ENCODE measurements at regions of chr20 and their contacts with region 1.

Region 1: DNA sequence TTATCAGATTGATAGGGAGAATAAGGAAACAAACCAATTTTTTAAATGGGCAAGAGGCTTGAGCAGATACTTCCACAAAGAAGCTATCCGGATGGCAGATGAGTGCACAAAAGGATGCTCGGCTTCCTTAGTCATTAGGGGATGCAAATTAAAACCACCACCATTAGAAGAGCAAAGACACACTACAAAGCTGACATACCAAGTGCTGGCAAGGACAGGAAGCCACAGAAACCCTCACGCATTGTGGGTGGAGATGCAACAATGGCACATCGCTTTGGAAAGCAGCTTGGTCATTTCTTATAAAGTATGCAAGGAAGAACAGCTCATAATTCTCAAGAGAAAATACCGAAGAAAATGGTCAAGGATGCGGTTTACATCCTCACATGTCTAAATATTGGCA is 19.8 kb downstream of the BFSP1 start:
- DNase-seq: no peak
- ATAC-seq: no peak
- H3K4me3 ChIP-seq: no peak overlapping the region
- H3K27ac ChIP-seq: no peak overlapping the region
- H3K4me1 ChIP-seq: no peaks in the 10 kb centered on the region
- CTCF ChIP-seq: no peak
- EP300 ChIP-seq: no peak
- POLR2A ChIP-seq: no peak
- RAD21 ChIP-seq: no peak

Region 2: GRCh38 chr20:17530716-17531664 is 19.6 kb after region 1 on chr20 and contains the start of gene BFSP1:
- CTCF ChIA-PET with region 1: interaction called, 32 read pairs
- POLR2A ChIA-PET with region 1: interaction called, 4 read pairs
- DNase-seq: peak; percentile 58 to 79
- ATAC-seq: peak; percentile 81 to 86
- H3K4me3 ChIP-seq: peak within 1 kb of the TSS; percentile 55
- H3K27ac ChIP-seq: peak within 1 kb of the TSS; percentile 86 to 95
- H3K4me1 ChIP-seq: peaks cover 21% of the 10 kb centered on the region
- CTCF ChIP-seq: peak; percentile 12; the same call in 1 of the 3 replicates
- EP300 ChIP-seq: no peak
- POLR2A ChIP-seq: peak; percentile 43
- RAD21 ChIP-seq: no peak
- polyA plus RNA-seq, gene BFSP1: 6.1 and 7.2 TPM in 2 replicates

Measured in A549 (cell line).